Activated CD4-positive, alpha-beta T cell treated with anti-CD3 and anti-CD28 coated beads for 36 hours (primary cell): ENCODE measurements at regions of chr2 and their contacts with region 1.

Region 1: GRCh38 chr2:8544786-8545694 is 136.8 kb upstream of the ID2 start:
- DNase-seq: peak; percentile 96
- ATAC-seq: peak; percentile 66
- H3K4me3 Mint-ChIP-seq: no peak overlapping the region
- H3K27ac Mint-ChIP-seq: peak overlapping the region; percentile 99
- H3K4me1 Mint-ChIP-seq: peaks cover 77% of the 10 kb centered on the region
- H3K27me3 Mint-ChIP-seq: no peaks in the 10 kb centered on the region

Region 2: DNA sequence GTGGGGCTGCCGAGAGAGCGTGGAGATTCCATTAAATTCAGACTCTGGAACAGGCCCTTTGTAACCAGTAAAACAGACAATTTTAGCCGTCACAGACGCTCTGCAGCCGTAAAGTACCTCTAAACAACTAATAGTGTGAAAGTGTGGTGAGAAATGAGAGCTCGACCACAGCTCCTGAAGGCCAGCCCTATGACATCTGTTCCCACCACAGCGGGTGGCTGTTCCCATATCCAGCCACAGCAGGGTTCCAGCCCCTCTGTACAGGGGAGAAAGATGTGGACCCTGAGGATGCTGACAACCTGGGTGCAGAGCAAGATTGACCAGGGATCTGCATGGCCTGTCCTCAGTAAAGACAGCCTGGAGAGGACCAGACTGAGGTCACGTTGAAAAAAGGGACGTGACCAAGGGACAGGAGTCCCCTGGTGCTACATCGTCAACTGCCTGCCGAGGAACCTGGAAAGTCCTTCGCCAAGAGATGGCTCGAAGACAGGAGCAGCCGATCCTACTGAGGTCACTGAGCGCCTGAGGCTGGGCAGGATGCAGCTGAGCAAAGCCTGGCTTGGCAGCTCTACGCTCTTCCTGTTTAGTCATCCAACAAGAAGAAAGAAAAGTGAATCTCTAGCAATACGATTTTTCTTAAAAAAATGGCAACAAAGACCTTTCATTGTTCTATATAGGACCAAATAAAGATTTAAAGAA is 796.2 kb before region 1 on chr2:
- CTCF ChIA-PET with region 1: no interaction called
- POLR2A ChIA-PET with region 1: no interaction called
- intact Hi-C with region 1: loop called in 1 of 2 experiments (anchors 10 kb)
- DNase-seq: peak; percentile 56
- ATAC-seq: peak; percentile 81
- H3K4me3 Mint-ChIP-seq: no peak overlapping the region
- H3K27ac Mint-ChIP-seq: no peak overlapping the region
- H3K4me1 Mint-ChIP-seq: peaks cover 11% of the 10 kb centered on the region
- H3K27me3 Mint-ChIP-seq: no peaks in the 10 kb centered on the region

Region 3: DNA sequence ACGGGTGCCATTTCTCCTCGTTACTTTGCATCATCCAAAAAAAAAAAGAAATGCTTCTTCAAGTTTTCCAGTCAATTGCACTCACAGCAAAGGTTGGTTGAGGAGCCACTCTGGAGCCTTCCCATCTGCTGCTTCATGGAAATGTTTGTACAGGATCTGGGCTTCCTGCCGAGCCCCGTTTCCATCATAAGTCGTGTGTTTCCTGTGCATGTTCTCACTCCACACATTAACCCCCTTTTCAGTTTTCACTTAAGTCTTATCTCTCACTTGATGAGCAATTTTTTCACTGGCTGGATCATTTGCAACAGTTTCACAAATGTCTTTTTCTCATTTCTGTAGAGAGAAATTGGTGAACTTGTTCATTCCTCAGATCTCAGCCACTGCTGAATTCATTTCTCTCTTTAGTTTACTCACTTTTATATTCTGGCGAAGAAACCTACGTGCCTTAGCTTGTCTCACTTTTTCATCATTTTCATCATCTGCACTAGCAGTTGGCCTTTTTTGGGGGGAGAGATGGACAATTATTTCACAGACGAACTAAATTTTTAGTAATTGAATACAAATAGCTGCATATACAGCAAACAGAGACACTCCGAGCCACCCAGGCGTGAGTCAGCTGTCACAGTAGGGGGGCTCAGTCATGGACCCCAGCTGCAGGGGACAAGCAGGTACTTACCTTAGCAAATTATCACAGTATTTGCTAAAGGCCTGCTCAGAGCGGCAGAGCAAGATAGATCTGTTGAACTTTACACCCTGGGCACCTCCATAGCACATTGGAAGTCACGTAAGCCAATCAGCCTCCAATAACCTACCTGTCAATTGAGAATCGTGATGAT is 614.0 kb before region 1 on chr2:
- CTCF ChIA-PET with region 1: no interaction called
- POLR2A ChIA-PET with region 1: no interaction called
- intact Hi-C with region 1: loop called in 1 of 2 experiments (anchors 1 kb)
- DNase-seq: peak; percentile 56
- ATAC-seq: peak; percentile 80
- H3K4me3 Mint-ChIP-seq: peak overlapping the region; percentile 0
- H3K27ac Mint-ChIP-seq: peak overlapping the region; percentile 93
- H3K4me1 Mint-ChIP-seq: peaks cover 33% of the 10 kb centered on the region
- H3K27me3 Mint-ChIP-seq: no peaks in the 10 kb centered on the region

Region 4: DNA sequence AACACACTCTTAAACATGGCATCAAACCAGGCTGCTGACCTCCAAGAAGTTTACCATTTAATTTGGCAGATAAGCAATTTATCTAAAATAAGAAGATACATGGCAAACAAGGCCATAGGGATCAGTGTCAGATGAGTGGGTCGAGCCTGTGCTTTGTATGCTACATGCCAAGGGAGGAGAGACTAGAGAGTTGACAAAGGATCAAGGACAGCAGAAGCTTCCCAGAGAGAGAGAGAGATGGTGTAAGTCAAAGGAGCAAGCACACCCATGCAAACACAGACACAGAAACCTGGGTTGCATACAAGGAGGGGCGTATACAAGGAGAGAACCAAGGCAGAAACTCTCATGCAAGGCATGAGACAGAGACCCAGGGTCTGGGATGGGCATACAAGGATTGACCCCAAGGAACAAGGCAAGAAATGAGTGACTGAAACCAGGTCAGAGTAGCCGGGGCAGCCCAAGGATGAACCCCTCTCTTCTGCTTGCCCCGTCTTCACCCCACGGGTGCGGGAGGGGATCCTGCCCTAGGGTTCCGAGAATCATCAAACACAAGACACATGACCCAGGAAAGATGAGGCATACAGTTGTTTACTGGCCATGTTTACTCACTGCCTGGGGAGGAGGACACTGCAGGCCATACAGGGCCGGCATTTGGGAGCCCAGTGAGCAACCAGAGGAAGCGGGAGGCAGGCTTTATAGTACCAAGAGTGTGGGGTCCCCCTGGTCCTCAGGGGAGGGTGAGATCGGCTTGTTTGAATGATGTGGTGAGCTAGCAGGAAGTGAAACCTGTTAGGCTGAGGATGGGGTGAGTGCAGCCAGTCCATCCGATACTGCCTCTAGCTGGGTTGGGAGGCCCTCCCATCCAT is 392.4 kb before region 1 on chr2:
- CTCF ChIA-PET with region 1: no interaction called
- POLR2A ChIA-PET with region 1: interaction called, 4 read pairs
- intact Hi-C with region 1: loop called (anchors 1 kb)
- DNase-seq: no peak
- ATAC-seq: no peak
- H3K4me3 Mint-ChIP-seq: no peak overlapping the region
- H3K27ac Mint-ChIP-seq: no peak overlapping the region
- H3K4me1 Mint-ChIP-seq: peaks cover 30% of the 10 kb centered on the region
- H3K27me3 Mint-ChIP-seq: no peaks in the 10 kb centered on the region

Region 5: DNA sequence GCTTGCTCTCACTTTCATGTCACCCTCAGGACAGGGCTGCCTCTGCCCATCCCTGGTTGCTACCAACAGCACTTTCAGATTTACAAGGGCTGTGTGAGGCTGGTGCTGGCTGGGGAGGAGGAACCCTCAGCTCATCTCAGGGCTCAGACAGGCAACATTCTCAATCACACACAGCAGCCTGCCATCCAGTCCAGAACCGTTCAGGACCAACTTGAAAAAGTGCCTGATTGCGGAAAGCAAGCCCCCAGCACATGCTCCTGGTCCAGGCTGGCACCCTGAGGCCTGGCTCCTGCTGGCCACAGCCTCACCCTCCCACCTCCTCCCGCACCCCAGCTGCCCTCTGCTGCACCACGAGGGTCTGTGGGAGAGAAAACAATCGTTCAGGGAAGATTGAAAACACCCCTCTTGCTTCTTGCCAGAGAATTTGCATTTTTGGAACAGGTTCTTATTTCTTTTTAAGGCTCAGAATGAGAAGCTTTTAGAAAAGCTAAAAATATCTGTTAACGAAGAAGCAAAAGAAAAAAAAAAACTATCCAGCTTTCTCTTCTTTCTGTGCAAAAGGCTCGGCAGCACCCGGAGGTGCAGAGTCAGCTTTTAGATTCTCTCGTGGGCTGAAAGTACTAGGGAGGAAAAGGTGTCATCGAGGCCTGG is 267.0 kb before region 1 on chr2:
- CTCF ChIA-PET with region 1: no interaction called
- POLR2A ChIA-PET with region 1: no interaction called
- intact Hi-C with region 1: no loop called
- DNase-seq: no peak
- ATAC-seq: peak; percentile 33
- H3K4me3 Mint-ChIP-seq: no peak overlapping the region
- H3K27ac Mint-ChIP-seq: no peak overlapping the region
- H3K4me1 Mint-ChIP-seq: peaks cover 16% of the 10 kb centered on the region
- H3K27me3 Mint-ChIP-seq: no peaks in the 10 kb centered on the region

Region 6: GRCh38 chr2:8408560-8409460 is 136.2 kb before region 1 on chr2:
- CTCF ChIA-PET with region 1: interaction called, 4 read pairs
- POLR2A ChIA-PET with region 1: interaction called, 27 read pairs
- intact Hi-C with region 1: loop called (anchors 1 kb)
- DNase-seq: peak; percentile 88
- ATAC-seq: peak; percentile 97
- H3K4me3 Mint-ChIP-seq: peak overlapping the region; percentile 28
- H3K27ac Mint-ChIP-seq: peak overlapping the region; percentile 84
- H3K4me1 Mint-ChIP-seq: peaks cover 33% of the 10 kb centered on the region
- H3K27me3 Mint-ChIP-seq: peaks cover 10% of the 10 kb centered on the region

Region 7: DNA sequence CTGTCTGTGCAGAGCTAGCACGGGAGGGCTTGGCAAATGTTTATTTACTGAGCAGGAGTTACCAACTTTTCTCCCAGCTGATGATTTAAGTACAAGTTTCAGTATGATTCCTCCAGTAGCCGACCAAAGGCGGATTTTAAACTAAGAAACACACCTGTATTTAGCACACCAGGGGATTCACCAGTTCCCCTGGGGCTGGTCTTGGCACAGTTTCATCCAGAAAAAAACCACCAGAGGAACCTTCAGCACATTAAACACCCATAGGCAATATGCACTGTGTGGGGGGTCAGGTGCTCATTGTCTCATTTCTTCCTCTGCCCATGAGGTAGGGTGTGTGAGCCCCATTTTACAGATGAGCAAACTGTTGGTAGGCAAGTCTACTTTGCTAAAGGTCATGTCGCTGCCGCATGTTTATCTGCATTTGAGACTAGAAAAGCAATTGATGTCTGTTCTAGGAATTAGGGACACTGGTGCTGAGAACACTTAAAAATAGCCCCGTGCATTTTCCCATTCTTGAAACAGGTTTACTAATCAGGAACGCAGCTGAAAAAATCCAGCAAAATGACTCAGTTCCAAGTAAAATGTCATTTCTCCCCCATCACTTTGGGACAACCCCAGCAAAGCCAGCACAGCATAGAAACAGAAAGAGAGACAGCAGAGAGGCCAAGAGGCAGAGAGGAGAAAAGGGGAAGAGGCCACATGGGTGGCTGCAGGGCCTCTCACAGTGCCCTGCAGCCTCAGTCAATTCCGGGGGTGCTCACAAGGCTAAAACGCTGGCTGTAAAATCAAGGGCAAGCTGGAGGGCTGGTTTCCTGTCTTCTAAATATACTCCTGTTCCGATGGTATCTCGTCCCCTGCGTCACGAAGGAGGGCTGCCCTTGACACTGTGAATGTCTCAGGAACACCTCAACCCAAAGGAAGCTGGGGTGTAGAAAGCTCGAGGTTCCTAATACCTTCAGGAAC is 30.0 kb before region 1 on chr2:
- CTCF ChIA-PET with region 1: interaction called, 16 read pairs
- POLR2A ChIA-PET with region 1: interaction called, 41 read pairs
- intact Hi-C with region 1: loop called (anchors 1 kb)
- DNase-seq: peak; percentile 82
- ATAC-seq: peak; percentile 86
- H3K4me3 Mint-ChIP-seq: peak overlapping the region; percentile 46
- H3K27ac Mint-ChIP-seq: peak overlapping the region; percentile 93
- H3K4me1 Mint-ChIP-seq: peaks cover 63% of the 10 kb centered on the region
- H3K27me3 Mint-ChIP-seq: no peaks in the 10 kb centered on the region

Region 8: GRCh38 chr2:9003616-9004337 is 458.7 kb after region 1 on chr2 and contains the start of gene MBOAT2:
- CTCF ChIA-PET with region 1: no interaction called
- POLR2A ChIA-PET with region 1: no interaction called
- intact Hi-C with region 1: loop called in 1 of 2 experiments (anchors 10 kb)
- DNase-seq: peak; percentile 89
- ATAC-seq: peak; percentile 96
- H3K4me3 Mint-ChIP-seq: peak within 1 kb of the TSS; percentile 75
- H3K27ac Mint-ChIP-seq: peak within 1 kb of the TSS; percentile 64
- H3K4me1 Mint-ChIP-seq: peaks cover 11% of the 10 kb centered on the region
- H3K27me3 Mint-ChIP-seq: peaks cover 6% of the 10 kb centered on the region
- total RNA-seq, gene MBOAT2: 4.7 to 6.9 TPM